Transverse colon (tissue), 4 donors: ENCODE measurements at regions of chr19 and their contacts with region 1.

Region 1: GRCh38 chr19:3324321-3324856 is 42.0 kb upstream of the NFIC start:
- DNase-seq: peak; percentile 78
- H3K4me3 ChIP-seq: no peak overlapping the region
- H3K27ac ChIP-seq: no peak overlapping the region
- H3K4me1 ChIP-seq: peaks cover 0 to 3% (median 0%) of the 10 kb centered on the region in 4 donors
- H3K27me3 ChIP-seq: peaks cover 17% of the 10 kb centered on the region
- CTCF ChIP-seq: peak; percentile 63 to 82 (median 73)
- EP300 ChIP-seq: no peak
- POLR2A ChIP-seq: no peak

Region 2: DNA sequence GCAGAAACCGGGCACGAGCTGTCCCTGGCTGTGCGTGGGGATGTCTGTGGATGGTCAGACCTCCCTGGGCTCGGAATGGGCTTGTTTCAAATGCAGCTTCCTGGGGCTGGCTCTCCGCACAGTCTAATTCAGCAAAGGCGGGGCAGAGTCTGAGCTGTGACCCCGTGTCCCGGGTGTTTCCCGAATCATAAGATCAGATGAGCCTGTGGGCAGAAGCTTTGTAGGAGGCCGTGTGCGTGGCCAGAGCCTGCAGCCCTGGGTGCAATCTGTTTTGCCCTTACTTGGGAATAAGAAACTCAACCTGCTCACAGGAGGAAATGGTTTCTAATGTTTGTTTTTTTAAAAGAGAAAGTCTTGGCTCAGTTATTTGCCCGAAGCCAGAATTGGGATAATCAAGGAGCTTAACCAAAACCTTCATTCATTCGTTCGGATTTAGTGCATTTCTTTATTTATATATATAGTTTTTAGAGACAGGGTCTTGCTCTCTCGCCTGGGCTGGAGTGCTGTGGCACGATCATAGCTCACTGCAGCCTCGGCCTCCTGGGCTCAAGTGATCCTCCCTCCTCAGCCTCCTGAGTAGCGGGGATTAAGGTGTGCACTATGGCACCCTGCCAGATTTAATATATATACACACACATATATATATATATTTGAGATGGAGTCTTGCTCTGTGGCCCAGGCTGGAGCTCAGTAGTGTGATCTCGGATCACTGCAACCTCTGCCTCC is 243.9 kb before region 1 on chr19:
- in situ Hi-C with region 1: no loop called
- intact Hi-C with region 1: no loop called
- DNase-seq: peak; percentile 79
- H3K4me3 ChIP-seq: no peak overlapping the region
- H3K27ac ChIP-seq: peak overlapping the region; percentile 63 to 78 (median 69)
- H3K4me1 ChIP-seq: peaks cover 0 to 45% (median 27%) of the 10 kb centered on the region in 4 donors
- H3K27me3 ChIP-seq: no peaks in the 10 kb centered on the region
- CTCF ChIP-seq: no peak
- EP300 ChIP-seq: no peak
- POLR2A ChIP-seq: peak; percentile 60

Region 3: DNA sequence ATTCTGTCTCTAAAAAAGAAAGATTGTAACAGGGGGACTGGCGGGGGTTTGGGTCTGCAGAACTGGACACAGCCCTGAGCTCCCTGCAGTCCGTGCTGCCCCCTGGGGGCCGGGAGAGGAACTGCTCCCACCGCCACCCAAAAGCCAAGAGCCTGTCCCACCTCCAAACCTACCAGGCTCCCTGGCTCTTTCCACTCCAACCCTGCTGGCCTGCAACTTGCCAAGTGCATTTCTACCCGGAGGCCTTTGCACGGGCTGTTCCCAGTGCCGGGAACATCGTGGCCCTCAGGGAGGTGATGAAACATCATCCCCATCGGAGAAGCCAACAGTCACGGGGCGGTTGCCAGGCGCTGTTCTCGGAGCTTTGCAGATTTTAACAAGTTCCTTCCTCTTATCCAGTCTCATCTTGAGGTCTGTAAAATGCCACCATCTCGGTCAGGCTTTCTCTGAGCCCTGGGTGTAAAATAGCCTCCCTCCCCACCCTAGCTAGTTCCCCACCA is 105.2 kb after region 1 on chr19:
- in situ Hi-C with region 1: loop called (anchors 10 kb)
- intact Hi-C with region 1: no loop called
- DNase-seq: peak; percentile 90
- H3K4me3 ChIP-seq: no peak overlapping the region
- H3K27ac ChIP-seq: peak overlapping the region; percentile 84 to 90 (median 88)
- H3K4me1 ChIP-seq: peaks cover 16 to 40% (median 25%) of the 10 kb centered on the region in 4 donors
- H3K27me3 ChIP-seq: no peaks in the 10 kb centered on the region
- CTCF ChIP-seq: peak; percentile 98 to 99 (median 99)
- EP300 ChIP-seq: peak; percentile 100
- POLR2A ChIP-seq: no peak

Region 4: DNA sequence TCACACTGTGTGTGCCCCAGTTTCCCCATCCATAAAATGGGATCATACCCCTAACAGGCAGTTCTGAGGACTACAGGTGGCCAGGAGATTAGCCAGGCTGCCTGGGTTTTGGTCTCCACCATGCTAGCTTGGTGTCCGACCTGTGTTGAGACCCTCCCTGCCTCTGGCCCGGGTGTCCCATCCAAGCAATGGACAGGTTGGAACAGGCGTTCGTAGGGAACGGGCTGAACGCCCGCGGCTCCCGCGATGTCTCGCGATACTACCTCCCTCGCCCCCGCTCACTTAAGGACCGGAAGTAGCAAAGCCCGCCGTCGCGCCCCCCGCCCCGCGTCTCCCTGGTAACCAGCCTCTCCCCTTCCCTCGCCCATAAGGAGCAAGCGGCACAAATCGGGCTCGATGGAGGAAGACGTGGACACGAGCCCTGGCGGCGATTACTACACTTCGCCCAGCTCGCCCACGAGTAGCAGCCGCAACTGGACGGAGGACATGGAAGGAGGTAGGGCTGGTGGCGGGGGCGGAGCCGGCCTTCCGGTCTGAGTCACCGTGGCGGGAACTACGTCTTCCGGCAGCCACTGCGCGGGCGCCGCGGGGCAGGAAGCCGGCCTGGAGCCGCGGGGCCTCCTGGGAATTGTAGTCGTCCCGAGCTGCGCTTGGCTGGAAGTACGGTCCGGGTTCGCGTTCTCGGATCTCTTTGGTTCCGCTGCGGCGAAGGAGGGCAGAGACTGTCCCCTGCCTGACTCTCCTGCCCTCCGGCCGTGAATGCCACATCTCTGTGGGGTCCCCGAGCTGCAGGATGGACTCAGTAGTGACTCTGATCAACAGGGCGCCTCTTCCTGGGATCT is 110.5 kb after region 1 on chr19:
- in situ Hi-C with region 1: loop called in 3 of 4 experiments (anchors 10 kb)
- intact Hi-C with region 1: no loop called
- DNase-seq: peak; percentile 96
- H3K4me3 ChIP-seq: peak overlapping the region in 3 of 4 donors; percentile 33 to 57 (median 39)
- H3K27ac ChIP-seq: peak overlapping the region; percentile 84 to 90 (median 88)
- H3K4me1 ChIP-seq: peaks cover 13 to 31% (median 18%) of the 10 kb centered on the region in 4 donors
- H3K27me3 ChIP-seq: no peaks in the 10 kb centered on the region
- CTCF ChIP-seq: peak in 1 of 5 experiments; percentile 16
- EP300 ChIP-seq: no peak
- POLR2A ChIP-seq: peak; percentile 44

Region 5: DNA sequence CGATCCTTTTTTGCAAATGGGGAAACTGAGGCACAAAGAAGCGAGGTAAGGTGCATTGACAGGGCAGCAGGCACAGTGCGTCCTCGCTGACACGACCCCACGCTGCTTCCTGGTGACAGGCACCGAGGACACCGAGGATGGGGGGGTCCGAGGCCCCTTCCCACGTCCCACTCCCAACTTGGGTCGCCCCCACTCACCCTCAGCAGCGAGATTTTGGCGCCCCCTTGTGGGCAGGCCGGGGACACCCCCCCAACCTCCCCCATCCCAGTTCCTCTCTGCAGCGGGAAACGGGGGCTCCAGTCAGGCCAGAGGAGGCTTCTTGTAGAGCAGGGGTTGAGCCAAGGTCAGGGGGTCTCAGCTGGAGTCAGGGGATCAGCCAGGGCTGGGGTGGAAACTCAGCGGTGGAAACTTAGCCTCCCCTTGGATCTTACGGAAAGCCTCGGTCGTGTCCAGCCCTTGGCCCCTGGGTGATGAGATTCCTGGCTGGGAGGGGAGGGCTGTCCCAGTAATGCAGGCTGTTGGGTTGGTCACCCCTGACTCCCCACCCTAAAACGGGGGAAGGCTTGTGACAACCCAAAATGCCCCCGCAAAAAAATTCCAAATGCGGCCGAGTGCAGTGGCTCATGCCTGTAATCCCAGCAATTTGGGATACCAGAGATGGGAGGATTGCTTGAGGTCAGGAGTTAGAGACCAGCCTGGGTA is 147.7 kb after region 1 on chr19:
- in situ Hi-C with region 1: loop called in 3 of 4 experiments (anchors 5 to 10 kb)
- intact Hi-C with region 1: loop called (anchors 2 kb)
- DNase-seq: peak; percentile 32
- H3K4me3 ChIP-seq: no peak overlapping the region
- H3K27ac ChIP-seq: no peak overlapping the region
- H3K4me1 ChIP-seq: peaks cover 7 to 23% (median 10%) of the 10 kb centered on the region in 4 donors
- H3K27me3 ChIP-seq: no peaks in the 10 kb centered on the region
- CTCF ChIP-seq: peak; percentile 78 to 86 (median 82)
- EP300 ChIP-seq: no peak
- POLR2A ChIP-seq: no peak